Activated CD4-positive, alpha-beta memory T cell treated with anti-CD3 and anti-CD28 coated beads, Interleukin-2, amount 10 ng/mL, durations not matched to agents 7 days and 5 days (primary cell): ENCODE measurements at regions of chr9 and their contacts with region 1.

Region 1: DNA sequence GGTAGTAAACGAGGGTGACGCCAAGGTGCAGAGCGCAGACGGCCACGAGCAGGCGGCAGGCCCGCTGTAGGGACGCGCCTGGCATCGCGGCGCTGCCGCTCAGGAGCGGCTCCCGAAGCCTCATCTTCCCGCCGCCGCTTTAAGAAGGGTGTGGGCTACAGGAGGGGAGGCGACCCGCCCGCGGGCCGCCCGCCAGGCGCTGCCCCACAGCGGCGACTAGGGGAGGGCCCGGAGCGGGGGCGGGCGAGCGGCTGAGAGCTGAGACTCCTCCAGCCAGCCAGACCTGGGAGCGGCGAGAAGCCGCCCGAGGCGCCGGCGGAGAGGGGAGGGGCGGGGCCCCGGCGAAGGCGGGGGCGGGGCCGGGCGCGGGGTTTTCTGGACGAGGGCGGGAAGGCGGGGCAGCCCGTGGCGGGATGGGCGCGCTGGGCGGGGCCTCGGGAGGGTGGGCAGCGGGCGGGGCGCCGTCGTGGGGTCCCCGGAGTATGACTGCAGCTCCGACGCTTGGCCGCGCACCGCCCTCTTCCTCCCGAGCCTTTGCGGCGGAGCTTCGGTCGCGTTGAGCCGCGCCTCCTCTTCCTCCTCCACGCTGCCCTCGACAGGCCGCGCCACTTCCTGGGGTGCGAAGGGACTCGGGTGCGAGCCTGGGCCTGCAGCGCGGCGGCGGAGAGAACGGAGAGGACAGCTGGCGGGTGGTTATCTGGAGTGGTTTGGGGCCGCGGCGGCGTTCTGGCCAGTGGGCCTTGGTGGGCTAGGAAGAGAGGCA is at the start of gene B4GALT1:
- DNase-seq: peak; percentile 98
- H3K4me3 Mint-ChIP-seq: peak within 1 kb of the TSS; percentile 89
- H3K27ac Mint-ChIP-seq: peak within 1 kb of the TSS; percentile 94
- H3K4me1 Mint-ChIP-seq: peaks cover 60% of the 10 kb centered on the region
- H3K27me3 Mint-ChIP-seq: no peaks in the 10 kb centered on the region
- total RNA-seq, gene B4GALT1: 69.2 to 70.8 TPM

Region 2: DNA sequence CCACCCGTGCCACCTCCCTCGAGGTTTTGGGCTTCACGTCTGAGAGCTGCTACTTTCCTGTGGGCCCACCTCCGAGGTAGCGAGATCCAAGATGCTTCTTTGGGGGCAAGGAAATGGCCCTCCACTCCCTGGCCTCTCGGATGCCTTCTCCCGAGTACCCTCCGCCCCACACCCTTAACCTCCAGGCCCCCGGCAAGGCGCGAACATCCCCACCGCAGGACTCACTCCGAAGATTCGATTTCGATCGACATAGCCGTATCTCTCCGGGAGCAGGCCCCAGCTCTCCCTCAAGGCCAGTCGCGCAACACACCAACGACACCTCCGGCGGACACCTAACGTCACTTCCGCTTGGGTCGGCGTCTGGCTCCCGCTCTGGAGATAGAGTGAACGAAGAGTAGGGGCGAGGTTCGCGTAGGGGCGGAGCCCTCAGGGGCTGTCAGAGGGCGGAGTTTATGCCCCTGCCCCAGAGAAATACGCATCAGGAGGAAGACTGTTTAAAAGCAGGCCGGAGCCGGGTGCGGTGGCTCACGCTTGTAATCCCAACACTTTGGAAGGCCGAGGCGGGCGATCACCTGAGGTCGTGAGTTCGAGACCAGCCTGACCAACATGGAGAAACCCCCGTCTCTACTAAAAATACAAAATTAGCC is 90.7 kb before region 1 on chr9 and contains the start of gene SMU1:
- CTCF ChIA-PET with region 1: interaction called, 11 read pairs
- POLR2A ChIA-PET with region 1: interaction called, 12 read pairs
- DNase-seq: peak; percentile 97
- H3K4me3 Mint-ChIP-seq: peak within 1 kb of the TSS; percentile 100
- H3K27ac Mint-ChIP-seq: peak within 1 kb of the TSS; percentile 99
- H3K4me1 Mint-ChIP-seq: peaks cover 52% of the 10 kb centered on the region
- H3K27me3 Mint-ChIP-seq: no peaks in the 10 kb centered on the region
- total RNA-seq, gene SMU1: 22.5 to 22.9 TPM

Region 3: GRCh38 chr9:33116860-33117259 is 50.4 kb before region 1 on chr9:
- CTCF ChIA-PET with region 1: no interaction called
- POLR2A ChIA-PET with region 1: interaction called, 11 read pairs
- DNase-seq: no peak
- H3K4me3 Mint-ChIP-seq: no peak overlapping the region
- H3K27ac Mint-ChIP-seq: peak overlapping the region; percentile 83
- H3K4me1 Mint-ChIP-seq: peaks cover 41% of the 10 kb centered on the region
- H3K27me3 Mint-ChIP-seq: no peaks in the 10 kb centered on the region

Region 4: GRCh38 chr9:33139421-33140228 is 27.6 kb before region 1 on chr9:
- CTCF ChIA-PET with region 1: interaction called, 4 read pairs
- POLR2A ChIA-PET with region 1: interaction called, 115 read pairs
- DNase-seq: no peak
- H3K4me3 Mint-ChIP-seq: no peak overlapping the region
- H3K27ac Mint-ChIP-seq: peak overlapping the region; percentile 8
- H3K4me1 Mint-ChIP-seq: peaks cover 87% of the 10 kb centered on the region
- H3K27me3 Mint-ChIP-seq: no peaks in the 10 kb centered on the region

Region 5: DNA sequence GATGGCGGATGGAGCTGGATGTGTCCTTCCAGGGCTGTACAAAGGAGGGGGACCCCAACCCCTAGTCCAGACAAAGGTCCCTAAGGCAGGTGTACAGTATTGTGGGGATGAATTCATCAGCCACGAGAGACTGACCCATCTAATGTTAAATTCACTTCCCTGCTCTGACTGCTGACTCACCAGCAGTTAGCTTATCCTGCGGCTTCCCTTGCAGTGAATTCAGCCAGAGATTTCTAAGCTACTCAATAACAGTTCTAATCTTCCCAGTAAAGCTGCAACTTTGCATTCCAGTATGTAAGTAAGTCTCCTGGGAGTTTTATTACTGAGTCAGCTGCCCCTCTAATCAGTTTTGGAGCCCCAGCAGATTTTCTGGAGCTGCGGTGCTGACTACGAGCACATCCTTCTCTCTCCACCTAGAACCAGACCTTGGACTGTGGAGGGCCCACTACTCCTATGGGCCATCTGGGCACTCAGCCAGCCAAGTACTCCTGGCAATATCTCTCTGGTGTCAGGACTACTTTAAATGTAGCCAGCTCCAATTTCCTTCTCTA is 16.1 kb before region 1 on chr9:
- CTCF ChIA-PET with region 1: interaction called, 4 read pairs
- POLR2A ChIA-PET with region 1: interaction called, 115 read pairs
- DNase-seq: no peak
- H3K4me3 Mint-ChIP-seq: no peak overlapping the region
- H3K27ac Mint-ChIP-seq: no peak overlapping the region
- H3K4me1 Mint-ChIP-seq: peaks cover 73% of the 10 kb centered on the region
- H3K27me3 Mint-ChIP-seq: no peaks in the 10 kb centered on the region

Region 6: DNA sequence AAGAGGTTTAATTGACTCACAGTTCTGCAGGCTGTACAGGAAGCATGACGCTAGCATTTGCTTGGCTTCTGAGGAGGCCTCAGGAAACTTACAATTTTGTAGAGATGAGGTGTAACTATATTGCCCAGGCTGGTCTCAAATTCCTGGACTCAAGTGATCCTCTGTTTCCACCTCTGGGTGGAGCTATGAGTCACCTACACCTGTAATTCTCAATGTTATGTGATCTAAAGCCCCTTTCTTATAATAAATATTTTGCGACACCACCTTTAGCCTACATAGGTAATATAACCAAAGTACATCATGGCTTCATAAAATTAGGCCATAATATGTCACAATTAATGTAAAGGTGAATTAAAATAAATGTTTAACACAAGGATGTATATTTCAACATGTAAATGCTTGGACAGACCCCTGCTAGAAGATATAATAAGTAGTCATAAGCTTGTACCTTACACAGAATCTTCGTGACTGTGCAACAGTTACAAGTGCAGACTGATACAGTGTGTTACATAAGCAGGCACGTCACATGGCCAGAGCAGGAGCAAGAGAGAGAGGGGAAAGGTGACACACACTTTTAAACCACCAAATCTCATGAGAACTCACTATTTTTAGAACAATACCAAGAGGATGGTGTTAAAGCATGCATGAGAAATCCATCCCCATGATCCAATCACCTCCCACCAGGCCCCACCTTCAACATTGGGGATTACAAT is 42.9 kb after region 1 on chr9:
- CTCF ChIA-PET with region 1: no interaction called
- POLR2A ChIA-PET with region 1: no interaction called
- DNase-seq: no peak
- H3K4me3 Mint-ChIP-seq: no peak overlapping the region
- H3K27ac Mint-ChIP-seq: no peak overlapping the region
- H3K4me1 Mint-ChIP-seq: peaks cover 7% of the 10 kb centered on the region
- H3K27me3 Mint-ChIP-seq: peaks cover 2% of the 10 kb centered on the region

Region 7: GRCh38 chr9:33225319-33226149 is 58.3 kb after region 1 on chr9:
- CTCF ChIA-PET with region 1: interaction called, 12 read pairs
- POLR2A ChIA-PET with region 1: interaction called, 7 read pairs
- DNase-seq: peak; percentile 79
- H3K4me3 Mint-ChIP-seq: no peak overlapping the region
- H3K27ac Mint-ChIP-seq: peak overlapping the region; percentile 24
- H3K4me1 Mint-ChIP-seq: peaks cover 36% of the 10 kb centered on the region
- H3K27me3 Mint-ChIP-seq: no peaks in the 10 kb centered on the region

Region 8: GRCh38 chr9:33430942-33431341 is 263.7 kb after region 1 on chr9:
- CTCF ChIA-PET with region 1: no interaction called
- POLR2A ChIA-PET with region 1: no interaction called
- DNase-seq: no peak
- H3K4me3 Mint-ChIP-seq: no peak overlapping the region
- H3K27ac Mint-ChIP-seq: no peak overlapping the region
- H3K4me1 Mint-ChIP-seq: peaks cover 20% of the 10 kb centered on the region
- H3K27me3 Mint-ChIP-seq: no peaks in the 10 kb centered on the region